ENCODE measurements at regions of chr3 and their contacts with region 1.

Region 1: DNA sequence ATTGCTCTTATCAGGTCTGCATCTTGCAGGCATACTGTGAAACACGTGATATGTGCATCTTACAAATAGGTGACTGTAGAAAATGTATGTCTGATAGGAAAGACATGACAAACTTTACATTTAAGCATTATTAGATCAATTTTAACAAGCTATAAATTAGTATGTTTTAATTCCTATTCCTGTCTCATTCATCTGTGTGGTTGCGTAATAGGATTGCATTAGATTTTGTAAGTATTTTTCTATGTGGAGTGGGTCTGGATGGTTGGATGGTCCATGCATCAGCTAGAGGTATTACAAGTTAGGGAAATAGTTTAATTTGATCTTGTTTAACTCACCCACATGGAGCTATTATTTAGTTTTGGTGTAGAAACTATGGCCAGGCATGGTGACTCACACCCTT is 18.8 kb downstream of the ASTE1 start:
- DNase-seq: no peak
- ATAC-seq: no peak
- H3K4me3 ChIP-seq: no peak overlapping the region
- H3K4me3 Mint-ChIP-seq: no peak overlapping the region
- H3K27ac ChIP-seq: no peak overlapping the region
- H3K27ac Mint-ChIP-seq: no peak overlapping the region
- H3K4me1 ChIP-seq: no peaks in the 10 kb centered on the region
- H3K4me1 Mint-ChIP-seq: peaks cover 0 to 13% (median 5%) of the 10 kb centered on the region in 7 donors
- H3K27me3 ChIP-seq: no peaks in the 10 kb centered on the region
- H3K27me3 Mint-ChIP-seq: no peaks in the 10 kb centered on the region

Region 2: GRCh38 chr3:130834476-130834875 is 173.3 kb before region 1 on chr3:
- CTCF ChIA-PET with region 1: no interaction called
- POLR2A ChIA-PET with region 1: no interaction called
- intact Hi-C with region 1: no loop called
- DNase-seq: no peak
- ATAC-seq: no peak
- H3K4me3 ChIP-seq: no peak overlapping the region
- H3K4me3 Mint-ChIP-seq: no peak overlapping the region
- H3K27ac ChIP-seq: no peak overlapping the region
- H3K27ac Mint-ChIP-seq: no peak overlapping the region
- H3K4me1 ChIP-seq: no peaks in the 10 kb centered on the region
- H3K4me1 Mint-ChIP-seq: peaks cover 0 to 3% (median 0%) of the 10 kb centered on the region in 7 donors
- H3K27me3 ChIP-seq: no peaks in the 10 kb centered on the region
- H3K27me3 Mint-ChIP-seq: peaks cover 0 to 26% (median 5%) of the 10 kb centered on the region in 5 donors

Region 3: DNA sequence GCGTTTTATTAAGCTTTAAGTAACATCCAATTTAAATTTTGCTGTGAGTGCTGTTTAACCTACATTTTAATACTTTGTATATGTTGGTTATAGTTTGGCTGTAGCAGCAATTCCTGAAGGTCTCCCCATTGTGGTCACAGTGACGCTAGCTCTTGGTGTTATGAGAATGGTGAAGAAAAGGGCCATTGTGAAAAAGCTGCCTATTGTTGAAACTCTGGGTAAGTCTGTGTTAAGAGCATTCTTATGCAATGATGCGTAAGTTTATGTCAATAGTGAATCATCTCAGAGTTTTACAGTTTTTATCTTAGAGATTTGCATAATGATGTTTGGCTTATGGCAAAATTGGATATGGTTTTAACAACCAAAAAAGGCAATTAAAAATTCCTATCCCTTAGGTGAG is 43.9 kb before region 1 on chr3:
- CTCF ChIA-PET with region 1: no interaction called
- POLR2A ChIA-PET with region 1: no interaction called
- intact Hi-C with region 1: loop called in 1 of 2 experiments (anchors 5 kb)
- DNase-seq: no peak
- ATAC-seq: no peak
- H3K4me3 ChIP-seq: no peak overlapping the region
- H3K4me3 Mint-ChIP-seq: no peak overlapping the region
- H3K27ac ChIP-seq: no peak overlapping the region
- H3K27ac Mint-ChIP-seq: no peak overlapping the region
- H3K4me1 ChIP-seq: no peaks in the 10 kb centered on the region
- H3K4me1 Mint-ChIP-seq: no peaks in the 10 kb centered on the region
- H3K27me3 ChIP-seq: no peaks in the 10 kb centered on the region
- H3K27me3 Mint-ChIP-seq: no peaks in the 10 kb centered on the region

Region 4: GRCh38 chr3:131020122-131020693 is 12.4 kb after region 1 on chr3:
- CTCF ChIA-PET with region 1: interaction called, 3 read pairs
- POLR2A ChIA-PET with region 1: interaction called, 46 read pairs
- intact Hi-C with region 1: loop called in 1 of 2 experiments (anchors 2 kb)
- DNase-seq: no peak
- ATAC-seq: peak; percentile 68
- H3K4me3 ChIP-seq: no peak overlapping the region
- H3K4me3 Mint-ChIP-seq: peak overlapping the region in 9 of 10 donors; percentile 10 to 88 (median 69)
- H3K27ac ChIP-seq: no peak overlapping the region
- H3K27ac Mint-ChIP-seq: peak overlapping the region in 7 of 9 donors; percentile 9 to 68 (median 46)
- H3K4me1 ChIP-seq: peaks cover 28 to 43% of the 10 kb centered on the region in 2 donors
- H3K4me1 Mint-ChIP-seq: peaks cover 45 to 84% (median 68%) of the 10 kb centered on the region in 7 donors
- H3K27me3 ChIP-seq: no peaks in the 10 kb centered on the region
- H3K27me3 Mint-ChIP-seq: no peaks in the 10 kb centered on the region

Measured in naive thymus-derived CD4-positive, alpha-beta T cell (primary cell).